ENCODE measurements at regions of chr20 and their contacts with region 1.

Region 1: DNA sequence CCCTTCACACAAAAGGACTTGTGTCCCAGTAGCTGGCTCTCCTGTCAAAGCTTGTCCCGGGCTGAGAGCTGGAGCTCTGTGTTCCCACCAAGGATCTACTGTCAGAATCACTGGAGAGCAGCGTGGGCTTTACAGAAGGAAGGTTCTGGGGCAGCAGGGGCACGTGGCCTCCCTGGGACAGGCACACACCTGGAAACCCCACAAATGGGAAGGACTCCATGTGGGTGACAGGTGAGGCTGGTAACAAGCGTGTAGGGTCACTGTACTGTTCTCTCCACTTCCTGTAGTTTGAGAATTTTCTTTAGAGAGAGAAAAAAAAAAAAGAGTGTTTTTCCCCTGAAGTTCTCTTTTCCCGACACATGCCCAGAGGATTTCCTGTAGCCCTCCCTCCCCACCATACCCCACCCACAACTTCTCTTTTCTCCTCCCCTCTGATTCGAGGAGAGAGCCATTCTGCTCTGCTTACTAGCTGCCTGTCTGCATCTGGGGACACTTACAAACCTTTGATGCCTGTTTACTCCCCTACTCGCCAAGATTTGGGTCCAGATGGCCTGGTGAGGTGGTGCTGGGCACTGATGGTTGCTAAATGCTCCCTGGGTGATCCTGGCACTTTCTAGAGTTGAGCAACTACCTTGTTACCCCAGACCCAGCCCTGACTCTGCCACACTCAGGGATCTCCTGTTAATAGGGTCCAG is 84.1 kb upstream of the SIRPA start:
- DNase-seq: no peak
- H3K4me3 ChIP-seq: no peak overlapping the region
- H3K27ac ChIP-seq: peak overlapping the region; percentile 80
- H3K27me3 ChIP-seq: no peaks in the 10 kb centered on the region
- CTCF ChIP-seq: no peak

Region 2: GRCh38 chr20:1741309-1742048 is 69.6 kb before region 1 on chr20:
- CTCF ChIA-PET with region 1: no interaction called
- POLR2A ChIA-PET with region 1: no interaction called
- DNase-seq: no peak
- H3K4me3 ChIP-seq: no peak overlapping the region
- H3K27ac ChIP-seq: no peak overlapping the region
- H3K27me3 ChIP-seq: peaks cover 6% of the 10 kb centered on the region
- CTCF ChIP-seq: no peak

Region 3: GRCh38 chr20:1830240-1830639 is 19.2 kb after region 1 on chr20:
- CTCF ChIA-PET with region 1: no interaction called
- POLR2A ChIA-PET with region 1: interaction called, 17 read pairs
- DNase-seq: peak; percentile 94
- H3K4me3 ChIP-seq: no peak overlapping the region
- H3K27ac ChIP-seq: peak overlapping the region; percentile 77
- H3K27me3 ChIP-seq: no peaks in the 10 kb centered on the region
- CTCF ChIP-seq: no peak

Region 4: GRCh38 chr20:1844325-1845162 is 33.5 kb after region 1 on chr20:
- CTCF ChIA-PET with region 1: no interaction called
- POLR2A ChIA-PET with region 1: interaction called, 10 read pairs
- DNase-seq: peak; percentile 93
- H3K4me3 ChIP-seq: no peak overlapping the region
- H3K27ac ChIP-seq: peak overlapping the region; percentile 97
- H3K27me3 ChIP-seq: no peaks in the 10 kb centered on the region
- CTCF ChIP-seq: no peak